PC-9 (cell line): ENCODE measurements at regions of chr5 and their contacts with region 1.

Region 1: GRCh38 chr5:137395008-137395755 is 103.9 kb downstream of the SPOCK1 start:
- DNase-seq: peak; percentile 63 to 79
- H3K4me3 ChIP-seq: no peak overlapping the region
- H3K27ac ChIP-seq: no peak overlapping the region
- H3K4me1 ChIP-seq: peaks cover 23% of the 10 kb centered on the region
- H3K27me3 ChIP-seq: no peaks in the 10 kb centered on the region
- CTCF ChIP-seq: no peak

Region 2: GRCh38 chr5:136780522-136780921 is 614.7 kb before region 1 on chr5:
- CTCF ChIA-PET with region 1: no interaction called
- POLR2A ChIA-PET with region 1: no interaction called
- intact Hi-C with region 1: no loop called
- DNase-seq: no peak
- H3K4me3 ChIP-seq: no peak overlapping the region
- H3K27ac ChIP-seq: no peak overlapping the region
- H3K4me1 ChIP-seq: no peaks in the 10 kb centered on the region
- H3K27me3 ChIP-seq: no peaks in the 10 kb centered on the region
- CTCF ChIP-seq: no peak

Region 3: DNA sequence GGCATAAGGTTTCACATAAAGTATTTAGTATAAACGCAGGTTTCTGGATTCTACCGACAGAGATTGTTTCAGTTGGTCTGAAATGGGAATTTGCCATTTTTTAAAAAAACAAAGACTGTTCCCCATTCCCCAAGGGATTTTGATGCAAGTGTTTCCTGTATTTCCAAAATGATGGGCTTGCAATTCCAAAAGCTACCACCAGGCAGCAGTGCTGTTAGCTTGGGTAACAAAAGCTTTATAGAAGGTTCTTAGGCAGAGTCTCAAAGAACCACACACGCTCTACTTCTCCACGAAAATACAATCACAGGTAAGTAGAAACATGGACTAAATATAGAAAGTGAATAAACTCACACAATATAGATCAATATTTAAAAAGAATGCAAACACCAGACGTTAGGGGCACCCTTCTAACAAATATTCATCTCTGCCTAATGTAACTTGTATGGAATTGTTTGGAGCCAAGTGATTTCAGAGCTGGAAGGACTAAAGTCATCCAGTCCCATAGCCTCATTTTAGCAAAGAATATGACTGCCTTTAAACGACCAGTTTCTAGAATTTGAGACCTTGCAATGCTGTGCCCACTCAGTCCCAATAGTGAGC is 50.4 kb before region 1 on chr5:
- CTCF ChIA-PET with region 1: no interaction called
- POLR2A ChIA-PET with region 1: no interaction called
- intact Hi-C with region 1: loop called (anchors 1 kb)
- DNase-seq: no peak
- H3K4me3 ChIP-seq: no peak overlapping the region
- H3K27ac ChIP-seq: no peak overlapping the region
- H3K4me1 ChIP-seq: peaks cover 25% of the 10 kb centered on the region
- H3K27me3 ChIP-seq: no peaks in the 10 kb centered on the region
- CTCF ChIP-seq: peak; percentile 86

Region 4: GRCh38 chr5:137836997-137837396 is 441.8 kb after region 1 on chr5:
- CTCF ChIA-PET with region 1: no interaction called
- POLR2A ChIA-PET with region 1: no interaction called
- intact Hi-C with region 1: no loop called
- DNase-seq: no peak
- H3K4me3 ChIP-seq: no peak overlapping the region
- H3K27ac ChIP-seq: no peak overlapping the region
- H3K4me1 ChIP-seq: peaks cover 30% of the 10 kb centered on the region
- H3K27me3 ChIP-seq: no peaks in the 10 kb centered on the region
- CTCF ChIP-seq: no peak